GM10248 (cell line): ENCODE measurements at regions of chr1 and their contacts with region 1.

Region 1: DNA sequence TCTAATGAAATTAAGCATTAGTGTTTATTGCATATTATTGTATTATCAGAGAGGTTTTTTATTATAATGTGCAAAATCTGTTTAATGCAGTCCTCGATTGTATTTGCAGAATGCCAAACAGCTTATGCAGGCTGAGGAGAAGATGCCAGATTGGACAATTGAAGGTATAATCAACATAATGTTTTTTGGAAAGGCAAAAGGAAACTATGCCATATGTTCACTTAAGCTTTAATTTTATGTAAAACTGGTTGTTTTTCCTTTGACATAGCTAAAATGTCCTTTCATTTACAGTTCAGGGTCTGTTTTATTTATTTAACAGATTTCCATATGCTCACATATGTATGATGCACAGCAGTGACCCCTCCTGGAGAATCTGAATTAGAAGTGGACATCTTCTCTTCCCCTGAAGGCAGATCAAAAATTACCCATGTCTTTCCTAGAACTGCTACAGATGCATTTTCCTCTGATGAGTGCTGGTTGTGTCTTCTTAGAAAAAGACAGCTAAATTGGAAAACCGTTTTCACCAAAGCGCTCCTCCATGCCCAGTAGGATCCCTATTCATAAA is 143.5 kb upstream of the USH2A start:
- DNase-seq: no peak
- CTCF ChIP-seq: peak; percentile 8

Region 2: DNA sequence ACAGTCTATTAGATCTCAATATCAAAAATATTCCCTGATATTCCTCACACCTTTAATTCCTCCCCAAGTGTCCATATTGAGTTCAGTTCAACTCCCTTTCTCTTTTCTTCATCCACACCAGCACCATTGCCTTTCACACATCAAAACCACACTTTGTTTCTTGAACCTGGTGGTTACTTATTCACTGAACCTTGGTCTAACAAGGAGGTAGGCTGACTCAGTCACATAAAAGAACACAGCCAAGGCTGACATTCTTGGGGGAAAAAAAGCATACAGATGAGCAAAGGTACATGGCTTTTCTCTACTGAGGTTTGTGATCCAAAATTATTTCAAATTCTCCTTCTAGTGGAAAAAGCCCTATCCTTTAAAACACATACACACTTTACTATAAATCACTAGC is 11.8 kb before region 1 on chr1:
- CTCF ChIA-PET with region 1: interaction called, 20 read pairs
- POLR2A ChIA-PET with region 1: no interaction called
- DNase-seq: no peak
- CTCF ChIP-seq: no peak